ENCODE measurements at regions of chr5 and their contacts with region 1.

Region 1: DNA sequence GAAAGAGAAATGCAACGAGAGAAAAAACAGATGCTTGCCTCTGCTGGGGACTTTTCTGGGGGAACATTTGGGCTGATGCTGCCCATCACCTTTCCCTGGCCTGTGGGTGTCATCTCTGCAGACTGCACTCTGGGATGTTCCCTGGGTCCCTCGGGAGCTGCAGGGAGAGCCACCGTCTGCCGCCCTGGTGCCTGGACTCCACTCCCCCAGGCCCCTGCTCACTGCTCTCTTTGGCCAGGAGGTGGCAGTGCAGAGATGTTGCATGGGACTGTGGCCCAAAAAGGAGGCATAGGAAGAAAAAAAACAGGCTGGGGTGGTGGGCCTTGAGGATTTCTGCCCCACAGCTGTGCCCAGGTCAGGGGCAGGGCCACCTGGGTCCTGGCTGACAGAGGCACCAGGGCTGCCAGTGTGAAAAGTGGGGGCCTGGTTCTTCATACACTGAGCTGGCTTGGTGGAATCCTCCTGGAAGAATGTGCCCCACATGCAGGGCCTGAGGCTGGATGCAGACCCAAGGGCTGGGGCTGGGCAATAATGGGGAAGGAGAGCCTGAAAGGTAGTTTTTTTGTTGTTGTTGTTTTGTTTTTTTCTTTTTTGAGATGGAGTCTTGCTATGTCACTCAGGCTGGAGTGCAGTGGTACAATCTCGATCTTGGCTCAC is 353.6 kb downstream of the SLIT3 start:
- DNase-seq: peak; percentile 24
- H3K4me3 ChIP-seq: no peak overlapping the region
- H3K27ac ChIP-seq: no peak overlapping the region
- H3K4me1 ChIP-seq: no peaks in the 10 kb centered on the region
- H3K27me3 ChIP-seq: no peaks in the 10 kb centered on the region
- CTCF ChIP-seq: peak; percentile 66 to 75
- POLR2A ChIP-seq: no peak

Region 2: GRCh38 chr5:168268949-168269943 is 678.1 kb before region 1 on chr5:
- CTCF ChIA-PET with region 1: no interaction called
- POLR2A ChIA-PET with region 1: no interaction called
- dilution Hi-C with region 1: no loop called
- intact Hi-C with region 1: loop called (anchors 1 kb)
- DNase-seq: peak; percentile 87
- H3K4me3 ChIP-seq: peak overlapping the region in 1 of 3 experiments; percentile 3
- H3K27ac ChIP-seq: no peak overlapping the region
- H3K4me1 ChIP-seq: no peaks in the 10 kb centered on the region
- H3K27me3 ChIP-seq: no peaks in the 10 kb centered on the region
- CTCF ChIP-seq: peak; percentile 87 to 88
- POLR2A ChIP-seq: no peak

Region 3: GRCh38 chr5:168706655-168707069 is 240.7 kb before region 1 on chr5:
- CTCF ChIA-PET with region 1: interaction called, 3 read pairs
- POLR2A ChIA-PET with region 1: no interaction called
- dilution Hi-C with region 1: no loop called
- intact Hi-C with region 1: loop called (anchors 2 kb)
- DNase-seq: peak; percentile 9
- H3K4me3 ChIP-seq: no peak overlapping the region
- H3K27ac ChIP-seq: no peak overlapping the region
- H3K4me1 ChIP-seq: no peaks in the 10 kb centered on the region
- H3K27me3 ChIP-seq: no peaks in the 10 kb centered on the region
- CTCF ChIP-seq: peak in 1 of 2 donors; percentile 47
- POLR2A ChIP-seq: no peak

Region 4: DNA sequence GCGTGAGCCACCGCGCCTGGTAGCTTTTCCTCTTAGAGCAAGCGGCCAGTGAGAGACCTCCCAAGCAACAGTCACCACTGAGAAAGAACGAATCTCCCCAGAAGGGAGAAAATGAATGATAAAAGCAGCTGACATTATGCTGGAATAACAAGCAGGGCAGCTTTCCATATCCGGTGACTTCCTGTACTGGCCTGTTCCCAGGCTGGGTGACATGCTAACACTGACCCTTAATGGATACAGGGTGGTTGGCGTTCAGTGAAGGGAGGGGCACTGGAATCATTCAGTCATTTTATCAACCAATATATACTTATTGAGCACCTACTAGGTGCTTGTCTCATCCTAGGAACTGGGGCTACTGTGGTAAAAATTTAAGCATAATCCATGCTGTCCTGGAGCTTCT is 10.8 kb before region 1 on chr5:
- CTCF ChIA-PET with region 1: interaction called, 10 read pairs
- POLR2A ChIA-PET with region 1: no interaction called
- dilution Hi-C with region 1: no loop called
- intact Hi-C with region 1: no loop called
- DNase-seq: no peak
- H3K4me3 ChIP-seq: no peak overlapping the region
- H3K27ac ChIP-seq: no peak overlapping the region
- H3K4me1 ChIP-seq: no peaks in the 10 kb centered on the region
- H3K27me3 ChIP-seq: no peaks in the 10 kb centered on the region
- CTCF ChIP-seq: no peak
- POLR2A ChIP-seq: no peak

Region 5: DNA sequence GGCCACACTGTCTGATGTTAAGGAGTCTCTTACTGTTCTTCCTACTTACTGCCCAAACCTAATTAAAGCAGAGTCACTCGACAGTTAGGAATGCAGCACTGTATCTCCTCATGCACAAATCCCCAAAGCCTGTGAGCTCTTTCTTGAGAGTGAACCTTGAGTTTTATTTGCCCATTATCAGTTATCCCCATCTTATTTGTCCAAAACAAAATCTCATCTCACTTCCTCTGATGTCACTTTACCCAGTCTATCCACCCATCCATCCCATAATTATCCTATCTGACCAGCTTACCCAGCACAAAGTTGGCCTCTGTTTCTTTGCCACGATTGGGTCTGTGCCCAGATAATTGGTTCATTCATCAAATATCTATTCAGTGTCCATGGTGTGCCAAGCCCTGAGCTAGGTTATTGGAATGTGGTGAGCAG is 102.8 kb after region 1 on chr5:
- CTCF ChIA-PET with region 1: no interaction called
- POLR2A ChIA-PET with region 1: no interaction called
- dilution Hi-C with region 1: no loop called
- intact Hi-C with region 1: no loop called
- DNase-seq: no peak
- H3K4me3 ChIP-seq: no peak overlapping the region
- H3K27ac ChIP-seq: no peak overlapping the region
- H3K4me1 ChIP-seq: no peaks in the 10 kb centered on the region
- H3K27me3 ChIP-seq: no peaks in the 10 kb centered on the region
- CTCF ChIP-seq: no peak
- POLR2A ChIP-seq: no peak

Region 6: DNA sequence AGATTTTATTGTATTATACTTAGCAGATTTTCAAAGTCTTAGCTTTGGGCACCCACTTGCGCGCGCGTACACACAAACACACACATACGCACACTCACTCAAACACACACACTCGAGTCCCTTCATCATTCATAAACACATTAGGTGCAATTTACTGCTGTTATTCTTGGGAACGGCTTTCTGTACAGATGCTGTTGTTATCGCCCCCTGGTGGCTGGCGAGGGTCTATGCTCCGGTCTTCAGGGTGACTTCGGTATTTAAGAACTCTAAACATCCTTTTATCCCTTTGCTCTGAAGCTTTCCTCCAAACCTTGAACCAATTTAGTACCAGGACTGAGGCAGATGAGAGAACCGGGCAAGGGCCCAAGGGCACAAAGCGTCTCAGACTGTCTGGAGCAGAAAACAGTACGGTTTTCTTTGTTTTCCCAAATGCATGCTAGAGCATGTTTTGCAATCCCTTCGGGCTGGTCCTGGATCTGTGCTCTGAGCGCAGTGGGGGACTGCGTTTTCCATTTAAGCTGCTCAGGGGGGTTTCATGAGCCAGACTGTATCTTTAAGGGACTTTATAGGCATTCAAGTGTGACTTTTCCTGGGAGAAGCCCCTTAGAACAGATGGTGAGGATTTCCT is 355.3 kb after region 1 on chr5:
- CTCF ChIA-PET with region 1: no interaction called
- POLR2A ChIA-PET with region 1: no interaction called
- dilution Hi-C with region 1: no loop called
- intact Hi-C with region 1: loop called (anchors 1 kb)
- DNase-seq: peak; percentile 85
- H3K4me3 ChIP-seq: no peak overlapping the region
- H3K27ac ChIP-seq: no peak overlapping the region
- H3K4me1 ChIP-seq: peaks cover 4% of the 10 kb centered on the region
- H3K27me3 ChIP-seq: peaks cover 21 to 36% of the 10 kb centered on the region in 2 experiments
- CTCF ChIP-seq: peak; percentile 90 to 93
- POLR2A ChIP-seq: no peak

Region 7: DNA sequence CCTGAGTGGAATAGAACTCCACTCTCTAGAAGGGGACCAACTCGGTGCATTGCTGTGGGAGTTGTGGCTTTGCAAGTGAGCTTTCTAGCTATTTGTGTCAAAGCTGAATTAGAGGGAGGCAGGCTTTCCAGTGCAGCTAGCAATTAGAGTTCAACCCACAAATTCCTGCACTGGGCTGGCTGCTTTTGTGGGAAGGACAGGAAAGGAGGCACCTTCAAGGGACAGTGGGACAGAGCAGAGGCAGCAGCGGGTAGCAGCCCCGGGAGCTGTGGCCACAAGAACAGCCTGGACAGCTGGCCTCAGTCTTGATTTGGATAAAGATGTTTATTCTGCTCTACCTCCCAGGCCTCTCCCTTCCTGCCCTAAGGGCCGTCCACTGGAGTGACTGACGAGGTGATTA is 437.3 kb after region 1 on chr5:
- CTCF ChIA-PET with region 1: no interaction called
- POLR2A ChIA-PET with region 1: no interaction called
- dilution Hi-C with region 1: no loop called
- intact Hi-C with region 1: no loop called
- DNase-seq: no peak
- H3K4me3 ChIP-seq: no peak overlapping the region
- H3K27ac ChIP-seq: no peak overlapping the region
- H3K4me1 ChIP-seq: no peaks in the 10 kb centered on the region
- H3K27me3 ChIP-seq: no peaks in the 10 kb centered on the region
- CTCF ChIP-seq: no peak
- POLR2A ChIP-seq: no peak

Measured in endothelial cell of umbilical vein (primary cell).